CD8-positive, alpha-beta T cell (primary cell): ENCODE measurements at regions of chrX and their contacts with region 1.

Region 1: GRCh38 chrX:19372170-19372546 is 28.4 kb downstream of the PDHA1 start:
- DNase-seq: peak; percentile 31 to 77 (median 63)
- ATAC-seq: peak; percentile 73
- H3K4me3 ChIP-seq: peak overlapping the region; percentile 22 to 51
- H3K4me3 Mint-ChIP-seq: peak overlapping the region; percentile 90
- H3K27ac ChIP-seq: no peak overlapping the region
- H3K27ac Mint-ChIP-seq: no peak overlapping the region
- H3K4me1 ChIP-seq: no peaks in the 10 kb centered on the region
- H3K4me1 Mint-ChIP-seq: peaks cover 5% of the 10 kb centered on the region
- H3K27me3 ChIP-seq: no peaks in the 10 kb centered on the region
- H3K27me3 Mint-ChIP-seq: no peaks in the 10 kb centered on the region
- CTCF ChIP-seq: peak; percentile 78

Region 2: GRCh38 chrX:19291086-19291485 is 81.1 kb before region 1 on chrX:
- CTCF ChIA-PET with region 1: no interaction called
- POLR2A ChIA-PET with region 1: no interaction called
- intact Hi-C with region 1: no loop called
- DNase-seq: no peak
- ATAC-seq: no peak
- H3K4me3 ChIP-seq: no peak overlapping the region
- H3K4me3 Mint-ChIP-seq: no peak overlapping the region
- H3K27ac ChIP-seq: no peak overlapping the region
- H3K27ac Mint-ChIP-seq: no peak overlapping the region
- H3K4me1 ChIP-seq: no peaks in the 10 kb centered on the region
- H3K4me1 Mint-ChIP-seq: no peaks in the 10 kb centered on the region
- H3K27me3 ChIP-seq: no peaks in the 10 kb centered on the region
- H3K27me3 Mint-ChIP-seq: peaks cover 13% of the 10 kb centered on the region
- CTCF ChIP-seq: no peak

Region 3: GRCh38 chrX:19382555-19383145 is 10.5 kb after region 1 on chrX:
- CTCF ChIA-PET with region 1: interaction called, 14 read pairs
- POLR2A ChIA-PET with region 1: no interaction called
- intact Hi-C with region 1: no loop called
- DNase-seq: peak; percentile 7 to 66 (median 47)
- ATAC-seq: peak; percentile 63
- H3K4me3 ChIP-seq: no peak overlapping the region
- H3K4me3 Mint-ChIP-seq: no peak overlapping the region
- H3K27ac ChIP-seq: no peak overlapping the region
- H3K27ac Mint-ChIP-seq: no peak overlapping the region
- H3K4me1 ChIP-seq: no peaks in the 10 kb centered on the region
- H3K4me1 Mint-ChIP-seq: no peaks in the 10 kb centered on the region
- H3K27me3 ChIP-seq: no peaks in the 10 kb centered on the region
- H3K27me3 Mint-ChIP-seq: peaks cover 4% of the 10 kb centered on the region
- CTCF ChIP-seq: peak; percentile 35

Region 4: DNA sequence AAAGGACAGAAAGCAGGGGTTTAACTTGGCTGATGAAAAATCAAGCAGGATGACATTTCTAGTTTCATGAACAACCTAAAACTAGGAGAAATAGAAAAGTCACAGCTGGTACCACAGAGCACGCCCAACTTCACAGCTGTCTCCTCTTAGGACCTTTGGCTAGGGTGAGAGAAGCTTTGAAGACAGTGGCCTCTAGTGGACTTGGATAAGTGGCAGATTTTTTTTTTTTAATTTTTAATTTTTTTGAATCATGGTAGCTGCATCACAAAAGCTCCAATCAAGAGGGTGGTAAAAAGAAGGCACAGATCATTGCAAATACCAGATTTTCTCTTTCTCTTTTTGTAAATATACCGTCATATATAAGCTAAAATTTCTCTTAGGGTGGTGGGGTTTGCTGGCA is 163.3 kb after region 1 on chrX:
- CTCF ChIA-PET with region 1: interaction called, 7 read pairs
- POLR2A ChIA-PET with region 1: no interaction called
- intact Hi-C with region 1: loop called in 1 of 2 experiments (anchors 5 kb)
- DNase-seq: no peak
- ATAC-seq: no peak
- H3K4me3 ChIP-seq: no peak overlapping the region
- H3K4me3 Mint-ChIP-seq: no peak overlapping the region
- H3K27ac ChIP-seq: no peak overlapping the region
- H3K27ac Mint-ChIP-seq: peak overlapping the region; percentile 50
- H3K4me1 ChIP-seq: no peaks in the 10 kb centered on the region
- H3K4me1 Mint-ChIP-seq: no peaks in the 10 kb centered on the region
- H3K27me3 ChIP-seq: no peaks in the 10 kb centered on the region
- H3K27me3 Mint-ChIP-seq: no peaks in the 10 kb centered on the region
- CTCF ChIP-seq: no peak

Region 5: DNA sequence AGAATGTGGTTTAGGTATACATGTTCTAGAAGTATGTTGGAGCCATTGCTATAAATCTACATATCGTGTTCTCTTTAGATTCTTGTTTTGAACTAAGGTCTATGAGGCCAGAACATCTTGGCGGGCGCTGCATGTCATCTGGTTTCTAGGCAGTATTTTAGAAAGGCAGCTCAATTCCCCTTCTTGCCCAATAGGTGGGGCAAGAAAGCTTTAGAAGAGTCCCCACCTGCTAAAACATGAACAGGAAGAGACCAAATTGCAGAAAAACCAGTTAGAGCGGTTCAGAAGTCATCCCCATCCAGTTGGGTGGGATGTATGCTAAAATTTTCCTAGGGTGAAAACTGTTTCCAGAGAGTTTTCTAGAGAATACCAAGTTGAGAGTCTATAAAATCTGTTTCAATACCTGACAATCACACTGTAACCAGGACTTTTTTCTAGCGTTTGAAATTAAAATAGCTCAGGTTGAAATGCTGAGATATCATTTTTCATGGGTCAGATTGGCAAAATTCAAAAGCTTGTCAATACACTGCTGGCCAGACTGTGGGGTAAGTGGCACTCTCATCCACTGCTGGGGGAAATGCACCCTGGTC is 532.7 kb after region 1 on chrX:
- CTCF ChIA-PET with region 1: interaction called, 3 read pairs
- POLR2A ChIA-PET with region 1: no interaction called
- intact Hi-C with region 1: loop called (anchors 1 to 10 kb)
- DNase-seq: peak in 4 of 9 experiments; percentile 9 to 71 (median 38)
- ATAC-seq: peak; percentile 69
- H3K4me3 ChIP-seq: no peak overlapping the region
- H3K4me3 Mint-ChIP-seq: no peak overlapping the region
- H3K27ac ChIP-seq: no peak overlapping the region
- H3K27ac Mint-ChIP-seq: no peak overlapping the region
- H3K4me1 ChIP-seq: no peaks in the 10 kb centered on the region
- H3K4me1 Mint-ChIP-seq: peaks cover 6% of the 10 kb centered on the region
- H3K27me3 ChIP-seq: no peaks in the 10 kb centered on the region
- H3K27me3 Mint-ChIP-seq: no peaks in the 10 kb centered on the region
- CTCF ChIP-seq: peak; percentile 43

Region 6: DNA sequence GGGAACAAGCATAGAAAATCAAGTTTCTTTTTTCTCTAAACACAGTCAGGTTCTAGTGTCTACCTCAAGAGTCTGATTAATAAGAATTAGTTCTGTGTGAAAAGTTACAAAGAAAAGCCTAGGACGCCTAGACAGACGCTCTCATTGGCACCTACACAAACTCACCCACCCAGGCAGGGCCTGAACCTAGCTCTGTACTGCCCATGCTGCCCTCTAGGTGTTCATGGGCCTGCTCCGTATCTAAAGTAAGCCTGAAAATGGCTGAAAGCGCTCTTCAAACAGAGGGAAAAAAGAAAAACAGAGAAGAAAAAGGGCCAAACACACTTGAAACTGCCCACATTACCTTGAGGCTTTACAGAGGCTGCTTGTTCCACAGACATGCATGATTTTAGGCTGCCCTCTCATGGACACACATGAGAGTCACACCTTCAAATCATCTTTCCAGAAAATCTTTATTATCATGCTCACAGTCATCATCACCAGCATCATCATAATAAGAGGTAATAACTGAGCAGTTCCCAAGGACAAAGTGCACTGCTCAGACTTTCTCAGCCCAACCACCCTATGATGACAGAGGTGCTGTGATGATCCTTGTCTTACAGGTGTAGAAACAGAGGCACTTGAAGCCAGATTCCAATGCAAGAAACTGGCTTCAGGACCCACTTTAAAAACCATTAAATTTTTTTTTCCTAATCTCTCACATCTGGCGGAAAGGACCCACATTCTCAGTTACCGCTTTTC is 695.0 kb after region 1 on chrX:
- CTCF ChIA-PET with region 1: interaction called, 8 read pairs
- POLR2A ChIA-PET with region 1: no interaction called
- intact Hi-C with region 1: loop called in 1 of 2 experiments (anchors 2 kb)
- DNase-seq: peak in 6 of 9 experiments; percentile 0 to 60 (median 16)
- ATAC-seq: peak; percentile 63
- H3K4me3 ChIP-seq: no peak overlapping the region
- H3K4me3 Mint-ChIP-seq: no peak overlapping the region
- H3K27ac ChIP-seq: no peak overlapping the region
- H3K27ac Mint-ChIP-seq: no peak overlapping the region
- H3K4me1 ChIP-seq: no peaks in the 10 kb centered on the region
- H3K4me1 Mint-ChIP-seq: no peaks in the 10 kb centered on the region
- H3K27me3 ChIP-seq: no peaks in the 10 kb centered on the region
- H3K27me3 Mint-ChIP-seq: no peaks in the 10 kb centered on the region
- CTCF ChIP-seq: peak; percentile 31

Region 7: DNA sequence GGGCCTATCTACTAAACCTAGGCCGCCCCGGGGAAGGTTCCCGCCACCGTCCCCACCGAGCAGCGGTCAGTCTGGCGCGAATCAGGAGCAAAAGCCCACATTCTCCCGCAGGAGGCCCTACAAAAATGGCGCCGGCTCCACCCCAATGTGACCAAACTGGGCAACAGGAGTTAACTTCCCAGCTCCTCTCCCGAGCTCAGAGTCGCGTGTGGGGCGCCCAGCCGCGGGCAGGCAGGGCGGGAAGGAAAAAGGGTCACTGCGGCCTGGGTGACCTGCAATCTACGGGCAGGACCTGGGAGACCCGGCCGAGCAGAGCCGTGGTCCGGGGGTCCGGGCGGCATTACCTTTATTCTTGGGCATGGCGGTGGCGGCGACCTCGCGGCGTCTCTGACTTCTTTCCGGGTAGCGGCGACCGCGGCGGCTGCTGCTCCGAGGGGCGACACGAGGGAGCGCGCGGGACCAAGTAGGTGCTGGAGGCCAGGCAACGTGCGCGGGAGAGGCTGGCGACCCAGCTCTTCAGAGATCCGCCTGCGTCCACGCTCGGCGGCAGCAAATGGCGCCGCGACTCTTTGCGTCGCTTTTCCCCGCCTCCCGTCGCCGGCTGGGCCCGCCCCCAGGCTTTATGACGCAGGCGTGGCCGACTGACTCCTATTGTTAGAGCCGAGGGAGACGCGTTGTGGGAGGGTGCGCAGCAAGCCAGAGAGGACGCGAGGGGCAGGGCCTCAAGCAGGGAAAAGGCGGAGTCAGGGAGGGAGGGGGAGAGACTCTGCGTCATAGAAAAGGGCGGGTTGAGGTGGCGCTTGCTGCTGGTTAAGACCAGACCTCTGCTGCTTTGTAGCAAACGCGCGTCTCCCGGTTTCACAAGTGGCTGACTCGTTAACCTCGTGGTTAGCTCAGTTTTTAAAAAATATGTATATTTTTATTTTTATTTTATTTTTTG is 769.4 kb after region 1 on chrX and contains the start of gene EIF1AX:
- CTCF ChIA-PET with region 1: no interaction called
- POLR2A ChIA-PET with region 1: no interaction called
- intact Hi-C with region 1: loop called in 1 of 2 experiments (anchors 10 kb)
- DNase-seq: peak; percentile 88 to 99 (median 96)
- ATAC-seq: peak; percentile 98
- H3K4me3 ChIP-seq: peak within 1 kb of the TSS; percentile 73 to 91
- H3K4me3 Mint-ChIP-seq: peak within 1 kb of the TSS; percentile 85
- H3K27ac ChIP-seq: peak within 1 kb of the TSS; percentile 79 to 84
- H3K27ac Mint-ChIP-seq: peak within 1 kb of the TSS; percentile 89
- H3K4me1 ChIP-seq: peaks cover 15% of the 10 kb centered on the region
- H3K4me1 Mint-ChIP-seq: peaks cover 26% of the 10 kb centered on the region
- H3K27me3 ChIP-seq: no peaks in the 10 kb centered on the region
- H3K27me3 Mint-ChIP-seq: no peaks in the 10 kb centered on the region
- CTCF ChIP-seq: no peak
- total RNA-seq, gene EIF1AX: 71.7 to 73.3 TPM